Aorta (tissue), 5 donors: ENCODE measurements at regions of chr4 and their contacts with region 1.

Region 1: DNA sequence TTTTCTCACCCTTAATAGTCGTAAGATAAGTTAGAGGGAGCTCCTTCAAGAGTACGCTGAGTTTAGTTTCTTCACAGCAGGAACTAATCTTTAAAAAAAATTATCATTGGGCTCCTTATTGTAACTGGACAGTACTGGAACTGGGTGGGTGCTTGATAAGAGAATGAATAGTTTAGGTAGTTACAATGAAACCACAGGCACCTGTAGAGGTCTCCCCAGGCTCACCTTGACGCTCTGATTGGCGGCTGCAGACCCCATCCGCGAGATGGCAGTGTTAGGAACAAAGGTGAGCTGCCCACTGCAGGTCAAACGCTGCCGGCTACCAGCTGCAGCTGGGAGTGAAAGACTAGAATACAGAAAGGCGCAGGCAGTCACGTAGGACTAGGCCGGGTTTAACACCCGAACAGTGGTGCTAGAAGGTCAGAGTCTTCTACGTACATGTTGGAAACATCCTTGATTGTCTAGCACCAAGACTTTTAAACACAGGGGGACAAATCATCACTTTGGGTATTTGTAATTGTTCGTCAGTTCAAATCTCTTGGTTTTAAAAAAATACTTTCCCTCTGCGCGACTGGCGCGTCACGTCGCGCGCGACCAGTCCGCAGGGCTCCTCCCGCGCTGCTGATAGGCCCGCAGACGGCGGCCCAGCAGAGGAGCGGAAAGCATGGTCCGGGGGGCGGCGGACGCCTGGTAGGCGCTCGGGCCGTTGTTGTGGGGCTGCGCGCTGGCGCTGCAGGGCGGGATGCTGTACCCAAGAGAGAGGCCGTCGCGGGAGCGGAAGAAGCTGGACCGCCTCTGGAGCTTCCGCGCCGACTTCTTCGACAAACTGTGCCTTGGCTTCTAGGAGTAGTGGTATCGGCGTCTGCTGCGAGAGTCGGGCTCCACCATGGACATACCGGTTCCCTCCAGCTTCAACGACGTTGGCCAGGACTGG is 45.6 kb downstream of the SMARCA5 start:
- DNase-seq: peak; percentile 76 to 89
- ATAC-seq: peak; percentile 92
- H3K4me3 ChIP-seq: peak overlapping the region; percentile 52 to 53
- H3K27ac ChIP-seq: peak overlapping the region in 1 of 2 donors; percentile 83
- H3K4me1 ChIP-seq: peaks cover 0 to 4% of the 10 kb centered on the region in 2 donors
- H3K27me3 ChIP-seq: no peaks in the 10 kb centered on the region

Region 2: GRCh38 chr4:143473334-143474126 is 85.6 kb before region 1 on chr4:
- intact Hi-C with region 1: no loop called
- DNase-seq: no peak
- ATAC-seq: no peak
- H3K4me3 ChIP-seq: no peak overlapping the region
- H3K27ac ChIP-seq: peak overlapping the region in 1 of 2 donors; percentile 6
- H3K4me1 ChIP-seq: no peaks in the 10 kb centered on the region
- H3K27me3 ChIP-seq: no peaks in the 10 kb centered on the region

Region 3: GRCh38 chr4:143921181-143921580 is 362.1 kb after region 1 on chr4:
- intact Hi-C with region 1: loop called in 1 of 2 experiments (anchors 10 kb)
- DNase-seq: no peak
- ATAC-seq: no peak
- H3K4me3 ChIP-seq: no peak overlapping the region
- H3K27ac ChIP-seq: no peak overlapping the region
- H3K4me1 ChIP-seq: no peaks in the 10 kb centered on the region
- H3K27me3 ChIP-seq: no peaks in the 10 kb centered on the region